ENCODE measurements at regions of chr11 and their contacts with region 1.

Region 1: GRCh38 chr11:66081505-66081904 is 11.4 kb downstream of the PACS1 start:
- DNase-seq: peak; percentile 62 to 91
- ATAC-seq: peak; percentile 86 to 95 (median 93)
- H3K4me3 ChIP-seq: no peak overlapping the region
- H3K4me3 Mint-ChIP-seq: peak overlapping the region; percentile 77
- H3K27ac ChIP-seq: peak overlapping the region; percentile 88
- H3K27ac Mint-ChIP-seq: peak overlapping the region; percentile 93
- H3K4me1 ChIP-seq: peaks cover 46% of the 10 kb centered on the region
- H3K4me1 Mint-ChIP-seq: peaks cover 65 to 70% of the 10 kb centered on the region in 2 donors
- H3K27me3 ChIP-seq: no peaks in the 10 kb centered on the region
- H3K27me3 Mint-ChIP-seq: no peaks in the 10 kb centered on the region
- CTCF ChIP-seq: no peak

Region 2: GRCh38 chr11:66100272-66101065 is 19.0 kb after region 1 on chr11:
- intact Hi-C with region 1: loop called (anchors 2 kb)
- DNase-seq: peak; percentile 48 to 87
- ATAC-seq: peak; percentile 85 to 92 (median 87)
- H3K4me3 ChIP-seq: peak overlapping the region; percentile 20
- H3K4me3 Mint-ChIP-seq: peak overlapping the region; percentile 76
- H3K27ac ChIP-seq: peak overlapping the region; percentile 75
- H3K27ac Mint-ChIP-seq: peak overlapping the region; percentile 85 to 87
- H3K4me1 ChIP-seq: peaks cover 26% of the 10 kb centered on the region
- H3K4me1 Mint-ChIP-seq: peaks cover 37 to 54% of the 10 kb centered on the region in 2 donors
- H3K27me3 ChIP-seq: no peaks in the 10 kb centered on the region
- H3K27me3 Mint-ChIP-seq: no peaks in the 10 kb centered on the region
- CTCF ChIP-seq: no peak

Region 3: DNA sequence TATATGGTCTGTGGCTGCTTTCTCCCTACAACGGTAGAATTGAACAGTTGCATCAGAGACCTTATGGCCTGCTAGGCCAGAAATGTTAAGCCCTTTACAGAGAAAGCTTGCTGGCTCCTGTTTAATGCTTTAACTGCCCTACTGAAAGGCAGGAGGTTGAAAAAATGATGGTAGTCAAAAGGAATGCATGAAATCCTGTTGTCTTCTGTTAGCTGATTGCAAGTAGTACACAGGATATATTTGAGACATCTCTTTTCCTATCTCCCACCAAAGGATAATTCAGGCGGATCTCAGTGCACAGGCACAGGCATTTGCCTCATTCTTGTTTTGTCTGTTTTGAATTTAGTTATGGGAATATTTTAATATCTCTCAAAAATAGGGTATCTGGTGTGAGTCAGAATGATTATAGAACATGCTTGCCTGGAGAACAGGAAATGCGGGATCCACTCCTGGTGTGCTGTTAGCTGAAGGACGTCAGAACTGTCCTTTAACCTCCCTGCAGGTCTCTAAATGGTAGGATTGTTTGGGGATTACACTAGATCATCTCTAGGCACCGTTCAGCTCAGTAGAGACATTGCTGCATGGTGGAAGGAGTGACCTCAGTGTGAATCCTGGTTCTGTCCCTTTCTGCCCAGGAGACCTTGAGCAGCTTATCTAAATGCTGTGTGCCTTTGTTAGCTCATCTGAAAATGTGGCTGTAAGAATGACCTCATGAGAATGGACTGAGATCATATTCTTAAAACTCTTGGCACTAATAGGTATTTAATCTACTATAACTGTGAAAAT is 38.0 kb after region 1 on chr11:
- intact Hi-C with region 1: loop called (anchors 5 kb)
- DNase-seq: no peak
- ATAC-seq: no peak
- H3K4me3 ChIP-seq: no peak overlapping the region
- H3K4me3 Mint-ChIP-seq: no peak overlapping the region
- H3K27ac ChIP-seq: no peak overlapping the region
- H3K27ac Mint-ChIP-seq: peak overlapping the region; percentile 91 to 92
- H3K4me1 ChIP-seq: peaks cover 46% of the 10 kb centered on the region
- H3K4me1 Mint-ChIP-seq: peaks cover 65 to 75% of the 10 kb centered on the region in 2 donors
- H3K27me3 ChIP-seq: no peaks in the 10 kb centered on the region
- H3K27me3 Mint-ChIP-seq: no peaks in the 10 kb centered on the region
- CTCF ChIP-seq: no peak

Measured in natural killer cell (primary cell).